ENCODE measurements at regions of chr17 and their contacts with region 1.

Region 1: DNA sequence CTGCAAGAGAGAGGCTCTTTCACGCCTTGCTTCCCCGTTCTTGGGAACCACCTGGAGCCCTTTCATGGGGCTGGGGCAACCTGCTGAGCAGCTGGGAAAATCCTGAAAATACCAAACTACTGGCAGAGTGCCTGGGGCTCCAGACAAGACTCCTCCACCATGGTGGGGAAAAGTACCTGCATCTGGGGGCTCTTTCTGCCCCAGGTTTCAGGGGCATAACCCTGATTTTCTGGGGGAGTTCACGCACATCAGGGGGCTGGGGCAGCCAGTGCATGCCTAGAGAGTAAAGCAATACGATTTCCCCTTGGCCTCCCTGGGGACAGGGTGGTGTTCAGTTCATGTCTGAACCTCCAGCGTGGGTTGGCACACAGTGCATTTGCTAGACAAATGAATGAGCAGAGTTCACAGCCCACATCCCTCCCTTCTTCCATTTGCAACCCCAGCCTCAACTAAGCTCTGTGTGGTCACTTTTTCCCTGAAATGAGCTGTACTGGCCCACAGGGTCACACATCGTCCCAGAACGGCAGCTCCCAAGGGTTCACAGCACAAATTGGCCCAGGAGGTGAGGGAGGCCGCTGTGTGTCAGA is 5.2 kb upstream of the CDC42EP4 start:
- DNase-seq: peak in 1 of 4 donors; percentile 27
- ATAC-seq: no peak
- H3K4me3 ChIP-seq: no peak overlapping the region
- H3K27ac ChIP-seq: peak overlapping the region in 2 of 4 donors; percentile 24 to 32
- H3K4me1 ChIP-seq: peaks cover 22% of the 10 kb centered on the region
- H3K27me3 ChIP-seq: no peaks in the 10 kb centered on the region
- CTCF ChIP-seq: no peak
- POLR2A ChIP-seq: no peak

Region 2: DNA sequence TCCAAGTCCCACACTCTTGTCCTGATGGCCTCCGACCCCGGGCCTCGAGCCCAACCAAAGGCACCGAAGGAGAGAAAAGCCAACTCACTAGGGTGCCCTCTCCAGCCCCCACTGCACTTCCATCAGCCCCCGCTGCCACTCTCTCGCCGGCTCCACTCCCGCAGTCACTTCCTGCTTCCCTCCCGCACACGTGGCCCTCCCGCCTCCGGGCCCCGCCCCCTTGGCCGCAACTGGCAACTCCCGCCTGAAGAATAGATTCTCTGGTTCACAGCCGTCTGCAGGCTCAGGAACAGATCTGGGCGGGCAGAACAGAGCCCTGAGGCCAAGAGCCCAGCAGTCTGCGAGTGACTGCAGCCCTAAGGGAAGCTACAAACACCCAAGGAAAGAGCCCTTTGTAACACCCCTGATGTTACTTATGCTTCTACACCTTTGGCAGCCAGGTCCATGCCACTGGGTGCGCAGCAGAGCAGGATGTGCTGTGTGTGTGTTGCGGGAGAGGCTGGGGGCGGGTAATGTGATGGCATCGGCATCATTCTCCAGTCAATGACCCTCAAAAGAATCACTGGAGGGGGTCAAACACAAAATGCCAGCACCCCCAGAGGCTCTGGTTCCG is 224.4 kb before region 1 on chr17 and contains the start of gene SLC39A11:
- intact Hi-C with region 1: no loop called
- DNase-seq: peak; percentile 92 to 95 (median 93)
- ATAC-seq: peak; percentile 99
- H3K4me3 ChIP-seq: peak within 1 kb of the TSS; percentile 63 to 78
- H3K27ac ChIP-seq: peak within 1 kb of the TSS; percentile 29 to 70 (median 50)
- H3K4me1 ChIP-seq: peaks cover 28% of the 10 kb centered on the region
- H3K27me3 ChIP-seq: no peaks in the 10 kb centered on the region
- CTCF ChIP-seq: peak in 3 of 7 experiments; percentile 7 to 30 (median 25)
- POLR2A ChIP-seq: peak in 2 of 3 donors; percentile 61 to 64
- total RNA-seq, gene SLC39A11: 27.8 to 39.6 TPM

Region 3: DNA sequence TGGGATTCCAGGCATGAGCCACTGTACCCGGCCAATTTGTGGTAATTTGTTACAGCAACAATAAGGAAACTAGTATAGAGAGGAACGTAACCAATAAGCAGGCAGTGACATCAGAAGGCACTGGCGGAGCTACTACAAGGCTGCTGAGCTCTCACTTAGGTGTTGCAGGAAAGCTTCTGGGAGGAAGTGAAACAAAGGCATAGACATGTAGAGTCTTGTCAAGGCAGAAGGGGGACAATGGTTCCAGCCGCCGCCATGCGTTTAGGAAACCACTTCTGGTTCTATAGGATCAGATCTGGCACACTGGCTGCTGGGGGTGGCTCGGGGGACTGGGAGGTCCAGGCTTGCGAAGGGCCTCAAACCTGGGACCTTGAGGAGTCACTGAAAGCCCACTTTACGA is 45.9 kb before region 1 on chr17:
- intact Hi-C with region 1: no loop called
- DNase-seq: no peak
- ATAC-seq: no peak
- H3K4me3 ChIP-seq: no peak overlapping the region
- H3K27ac ChIP-seq: no peak overlapping the region
- H3K4me1 ChIP-seq: peaks cover 35% of the 10 kb centered on the region
- H3K27me3 ChIP-seq: no peaks in the 10 kb centered on the region
- CTCF ChIP-seq: no peak
- POLR2A ChIP-seq: no peak

Region 4: DNA sequence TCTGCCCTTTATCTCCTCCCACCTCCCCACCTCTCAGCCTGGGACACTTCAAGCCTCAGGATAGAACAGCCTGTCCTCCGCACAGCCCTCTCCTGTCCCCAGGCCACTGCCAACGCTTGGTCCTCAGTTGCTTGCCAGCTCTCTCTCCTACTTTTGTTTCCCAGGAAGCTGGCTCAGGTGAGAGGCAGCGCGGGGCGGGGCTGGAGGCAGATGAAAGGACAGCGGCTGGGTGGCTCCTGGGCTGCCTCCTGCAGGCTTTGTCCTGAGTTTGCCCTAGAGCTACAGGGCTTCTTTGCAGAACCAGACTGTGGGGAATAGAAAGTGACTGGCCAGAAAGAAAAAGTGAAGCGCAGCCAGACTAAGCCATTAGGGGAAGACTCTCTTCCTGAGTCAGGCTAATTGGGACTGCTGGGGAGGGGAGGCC is 43.0 kb after region 1 on chr17:
- intact Hi-C with region 1: loop called (anchors 5 kb)
- DNase-seq: peak; percentile 85 to 93 (median 93)
- ATAC-seq: peak; percentile 79
- H3K4me3 ChIP-seq: no peak overlapping the region
- H3K27ac ChIP-seq: peak overlapping the region; percentile 45 to 81 (median 74)
- H3K4me1 ChIP-seq: peaks cover 29% of the 10 kb centered on the region
- H3K27me3 ChIP-seq: no peaks in the 10 kb centered on the region
- CTCF ChIP-seq: peak in 6 of 7 experiments; percentile 8 to 63 (median 52)
- POLR2A ChIP-seq: peak in 2 of 3 donors; percentile 40 to 54